Activated naive CD4-positive, alpha-beta T cell treated with anti-CD3 and anti-CD28 coated beads for 36 hours (primary cell): ENCODE measurements at regions of chr12 and their contacts with region 1.

Region 1: DNA sequence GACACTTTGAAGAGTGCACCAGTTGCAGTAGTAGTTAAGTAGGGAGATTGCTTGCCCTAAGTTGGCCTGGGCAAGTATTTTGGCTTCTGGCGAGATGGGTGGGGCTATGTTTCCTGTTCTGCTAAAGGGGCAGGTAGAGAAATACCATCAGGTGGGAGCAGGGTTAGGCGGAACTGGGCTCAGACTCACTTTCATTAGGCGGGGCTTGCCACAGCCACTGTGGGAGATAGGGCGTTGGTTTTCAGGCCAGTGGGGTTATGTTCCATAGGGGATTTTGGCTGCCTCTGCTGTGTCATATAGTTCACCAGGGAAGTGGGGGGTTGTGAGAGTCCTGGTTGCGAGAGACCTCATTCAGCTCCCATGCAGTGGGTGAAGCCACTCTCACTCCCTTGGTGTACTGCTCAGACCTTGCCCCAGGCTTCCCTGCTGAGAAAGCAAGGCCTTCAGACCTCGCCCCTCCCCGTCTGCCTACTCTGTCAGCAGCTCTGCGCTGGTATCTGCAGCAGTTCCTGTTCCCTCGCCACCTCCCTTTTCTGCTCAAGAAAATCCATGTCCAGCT is 43.3 kb downstream of the AEBP2 start:
- DNase-seq: peak; percentile 63
- H3K4me3 Mint-ChIP-seq: no peak overlapping the region
- H3K27ac Mint-ChIP-seq: peak overlapping the region; percentile 39
- H3K4me1 Mint-ChIP-seq: peaks cover 44% of the 10 kb centered on the region
- H3K27me3 Mint-ChIP-seq: no peaks in the 10 kb centered on the region

Region 2: GRCh38 chr12:19239616-19240234 is 242.9 kb before region 1 on chr12:
- CTCF ChIA-PET with region 1: no interaction called
- intact Hi-C with region 1: no loop called
- DNase-seq: no peak
- H3K4me3 Mint-ChIP-seq: no peak overlapping the region
- H3K27ac Mint-ChIP-seq: no peak overlapping the region
- H3K4me1 Mint-ChIP-seq: peaks cover 5% of the 10 kb centered on the region
- H3K27me3 Mint-ChIP-seq: peaks cover 2% of the 10 kb centered on the region

Region 3: GRCh38 chr12:19382111-19382526 is 100.5 kb before region 1 on chr12:
- CTCF ChIA-PET with region 1: no interaction called
- intact Hi-C with region 1: loop called (anchors 2 kb)
- DNase-seq: peak; percentile 83
- H3K4me3 Mint-ChIP-seq: no peak overlapping the region
- H3K27ac Mint-ChIP-seq: peak overlapping the region; percentile 66
- H3K4me1 Mint-ChIP-seq: peaks cover 10% of the 10 kb centered on the region
- H3K27me3 Mint-ChIP-seq: no peaks in the 10 kb centered on the region

Region 4: DNA sequence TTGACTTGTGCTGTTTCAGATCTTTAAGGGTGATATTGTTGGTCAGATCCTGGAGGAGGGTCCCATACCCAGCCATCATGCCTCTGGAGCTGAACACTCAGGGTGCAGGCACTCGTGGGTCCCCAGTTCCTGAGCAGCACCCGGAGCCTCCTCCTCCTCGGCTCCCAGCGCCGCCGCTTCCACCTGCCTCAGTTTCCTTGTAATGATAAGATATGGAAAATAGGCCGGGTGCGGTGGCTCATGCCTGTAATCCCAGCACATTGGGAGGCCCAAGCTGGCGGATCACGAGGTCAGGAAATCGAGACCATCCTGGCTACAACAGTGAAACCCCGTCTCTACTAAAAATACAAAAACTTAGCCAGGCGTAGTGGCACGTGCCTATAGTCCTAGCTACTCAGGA is 63.5 kb before region 1 on chr12:
- CTCF ChIA-PET with region 1: no interaction called
- intact Hi-C with region 1: no loop called
- DNase-seq: no peak
- H3K4me3 Mint-ChIP-seq: no peak overlapping the region
- H3K27ac Mint-ChIP-seq: no peak overlapping the region
- H3K4me1 Mint-ChIP-seq: peaks cover 2% of the 10 kb centered on the region
- H3K27me3 Mint-ChIP-seq: no peaks in the 10 kb centered on the region

Region 5: DNA sequence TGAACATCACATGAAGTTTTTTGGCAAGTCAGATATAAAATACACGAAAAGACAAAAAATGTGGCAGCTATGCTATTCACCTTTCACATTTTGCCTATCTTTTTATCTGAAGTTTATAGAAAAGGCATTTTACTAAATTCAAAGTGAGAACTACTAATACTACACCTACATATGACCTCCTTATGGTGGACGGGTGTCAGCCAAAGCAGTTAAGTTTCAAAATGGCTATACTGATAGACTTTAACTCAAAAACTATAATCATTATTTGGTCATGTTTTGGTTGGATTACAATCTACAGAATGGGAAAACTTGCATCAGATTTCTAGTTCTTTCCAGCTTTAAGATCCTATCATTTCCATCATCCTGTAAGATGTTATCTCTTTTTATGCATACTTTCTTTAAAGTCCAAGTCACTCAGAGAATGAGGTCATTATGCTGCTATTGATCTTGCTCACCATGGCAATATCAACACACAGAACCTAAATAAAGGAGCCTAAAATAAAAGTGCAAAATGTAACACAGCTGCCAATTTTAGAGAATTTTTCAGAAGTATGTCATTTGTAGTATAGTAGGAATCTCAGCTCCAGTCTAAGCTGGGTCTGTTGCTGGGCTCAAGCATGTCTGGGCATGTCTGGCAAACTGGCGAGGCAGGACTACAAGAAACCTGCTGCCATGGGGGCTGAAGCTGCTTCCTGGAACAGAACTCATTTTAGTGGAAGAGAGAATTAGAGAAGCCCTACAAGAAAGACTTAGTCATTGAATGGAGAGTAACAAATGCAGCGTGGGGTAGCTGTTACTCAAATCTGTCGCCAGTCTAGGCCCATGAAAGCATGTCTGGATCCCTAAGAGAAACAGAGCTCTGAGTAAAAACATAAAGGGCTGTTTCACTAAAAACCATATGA is 51.0 kb before region 1 on chr12:
- CTCF ChIA-PET with region 1: no interaction called
- intact Hi-C with region 1: loop called (anchors 1 kb)
- DNase-seq: peak; percentile 75
- H3K4me3 Mint-ChIP-seq: no peak overlapping the region
- H3K27ac Mint-ChIP-seq: peak overlapping the region; percentile 95
- H3K4me1 Mint-ChIP-seq: peaks cover 20% of the 10 kb centered on the region
- H3K27me3 Mint-ChIP-seq: no peaks in the 10 kb centered on the region

Region 6: GRCh38 chr12:19439059-19440018 is 43.3 kb before region 1 on chr12 and contains the start of gene AEBP2:
- CTCF ChIA-PET with region 1: no interaction called
- intact Hi-C with region 1: loop called (anchors 1 kb)
- DNase-seq: peak; percentile 90
- H3K4me3 Mint-ChIP-seq: peak within 1 kb of the TSS; percentile 98
- H3K27ac Mint-ChIP-seq: peak within 1 kb of the TSS; percentile 94
- H3K4me1 Mint-ChIP-seq: peaks cover 29% of the 10 kb centered on the region
- H3K27me3 Mint-ChIP-seq: no peaks in the 10 kb centered on the region
- total RNA-seq, gene AEBP2: 32.4 to 35.2 TPM

Region 7: DNA sequence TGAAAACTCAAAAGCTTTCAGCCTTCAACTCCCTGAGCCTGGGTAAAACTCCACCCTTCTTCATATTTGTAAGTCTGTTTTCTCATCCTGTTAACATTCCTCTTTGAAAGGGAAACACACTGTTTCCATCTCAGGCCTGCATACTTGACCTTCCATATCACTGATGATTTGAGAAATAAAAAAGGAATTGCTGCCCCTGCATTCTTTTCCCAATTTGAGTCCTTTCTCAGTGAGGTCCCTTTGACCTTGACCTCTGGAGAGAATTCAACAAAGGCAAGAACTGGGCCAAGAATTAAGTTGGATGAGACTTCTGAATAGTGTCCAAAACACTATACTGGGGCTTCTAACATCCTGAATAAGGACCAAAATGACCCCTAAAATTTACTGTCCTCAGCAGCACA is 64.6 kb after region 1 on chr12:
- CTCF ChIA-PET with region 1: no interaction called
- intact Hi-C with region 1: loop called (anchors 1 kb)
- DNase-seq: no peak
- H3K4me3 Mint-ChIP-seq: no peak overlapping the region
- H3K27ac Mint-ChIP-seq: no peak overlapping the region
- H3K4me1 Mint-ChIP-seq: peaks cover 5% of the 10 kb centered on the region
- H3K27me3 Mint-ChIP-seq: no peaks in the 10 kb centered on the region